ENCODE measurements at regions of chr2 and their contacts with region 1.

Region 1: GRCh38 chr2:191656391-191656790 is 21.5 kb upstream of the NABP1 start:
- DNase-seq: no peak
- ATAC-seq: no peak
- H3K4me3 Mint-ChIP-seq: no peak overlapping the region
- H3K27ac Mint-ChIP-seq: no peak overlapping the region
- H3K4me1 Mint-ChIP-seq: peaks cover 5% of the 10 kb centered on the region
- H3K27me3 Mint-ChIP-seq: no peaks in the 10 kb centered on the region
- CTCF ChIP-seq: no peak

Region 2: DNA sequence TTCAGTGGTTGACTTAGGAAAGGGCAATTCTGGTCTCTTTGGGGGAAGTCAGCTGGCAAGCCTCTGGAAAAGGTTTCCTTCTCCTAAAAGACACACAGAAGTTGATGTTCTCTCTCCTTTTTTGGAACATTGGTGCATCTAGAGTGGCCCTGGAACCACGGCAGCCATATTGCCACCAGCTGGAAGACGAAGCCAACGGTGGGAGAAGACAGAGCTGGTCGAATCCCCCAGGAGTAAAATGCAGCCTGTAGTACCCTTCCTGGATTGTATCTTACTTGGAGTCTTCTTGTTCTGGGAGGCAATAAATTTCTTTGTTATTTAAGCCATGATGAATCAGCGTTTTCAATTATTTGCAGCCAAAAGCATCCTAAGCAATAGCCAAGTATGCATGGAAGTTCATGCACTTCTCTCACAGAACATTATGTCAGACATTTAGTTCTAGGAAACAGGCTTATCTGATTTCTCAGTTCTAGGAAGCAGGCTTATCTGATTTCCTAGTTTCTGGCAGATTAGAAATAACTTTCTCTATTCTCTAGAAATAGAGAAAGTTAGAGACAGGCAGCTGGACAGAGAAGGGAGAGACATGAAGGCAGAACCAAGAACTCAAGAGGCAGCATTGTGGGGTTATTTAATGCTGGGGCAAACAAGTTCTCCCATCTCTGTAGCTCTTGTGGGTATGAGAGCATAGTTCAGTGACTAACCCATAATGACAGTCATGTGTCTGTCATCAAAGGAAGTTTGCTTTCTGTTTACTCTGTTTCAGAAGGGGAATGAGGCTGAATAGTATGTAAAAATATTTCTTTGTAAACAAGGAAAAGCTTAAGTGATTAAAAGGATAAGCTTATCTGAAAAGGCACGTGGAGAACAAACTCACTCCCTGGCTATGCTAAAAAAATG is 19.0 kb before region 1 on chr2:
- CTCF ChIA-PET with region 1: no interaction called
- POLR2A ChIA-PET with region 1: interaction called, 4 read pairs
- intact Hi-C with region 1: loop called (anchors 2 kb)
- DNase-seq: no peak
- ATAC-seq: peak; percentile 54
- H3K4me3 Mint-ChIP-seq: no peak overlapping the region
- H3K27ac Mint-ChIP-seq: peak overlapping the region; percentile 38
- H3K4me1 Mint-ChIP-seq: peaks cover 30% of the 10 kb centered on the region
- H3K27me3 Mint-ChIP-seq: no peaks in the 10 kb centered on the region
- CTCF ChIP-seq: no peak